ENCODE measurements at regions of chr6 and their contacts with region 1.

Region 1: GRCh38 chr6:146957181-146958093 is 246.8 kb upstream of the STXBP5 start:
- DNase-seq: no peak
- H3K4me3 ChIP-seq: no peak overlapping the region
- CTCF ChIP-seq: no peak
- POLR2A ChIP-seq: no peak

Region 2: DNA sequence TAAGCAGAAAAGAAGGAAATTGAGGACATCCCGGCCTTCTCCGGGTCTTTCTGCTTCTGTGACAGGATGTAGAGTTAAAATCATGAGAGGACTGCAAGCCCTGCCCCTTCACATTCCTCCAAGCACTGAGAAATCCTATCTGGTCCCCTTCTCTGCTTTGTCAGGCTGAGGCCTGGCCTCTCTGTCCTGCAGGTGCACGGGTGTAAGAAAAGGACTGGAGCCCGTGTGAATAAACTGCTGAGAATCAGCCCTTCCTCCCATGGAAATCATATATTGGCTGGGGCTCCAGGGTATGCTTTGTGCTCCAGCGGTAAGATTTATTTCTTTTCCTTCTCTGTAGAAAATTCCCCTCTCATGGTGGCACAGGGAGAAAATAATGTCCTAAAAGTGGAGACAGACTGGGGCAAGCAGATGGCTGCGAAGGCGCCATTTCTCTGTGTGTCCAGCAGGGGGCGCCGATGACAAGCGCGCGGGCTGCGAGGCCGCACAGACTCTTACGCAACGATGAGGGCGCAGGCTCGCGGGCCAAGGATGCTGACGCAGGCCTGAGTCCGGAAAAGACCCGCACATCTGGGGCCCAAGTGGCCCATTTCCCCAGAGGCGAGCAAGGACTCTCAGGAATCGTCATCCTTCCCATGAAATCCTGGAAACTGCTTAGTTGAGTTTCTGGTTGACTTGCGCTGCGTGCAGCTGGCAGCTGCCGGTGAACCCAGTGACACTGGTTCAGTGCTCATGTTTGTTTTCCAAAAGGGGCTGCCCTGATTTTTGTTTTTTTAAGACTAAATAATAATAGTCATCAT is 100.1 kb before region 1 on chr6:
- intact Hi-C with region 1: no loop called
- DNase-seq: peak; percentile 76 to 97
- H3K4me3 ChIP-seq: no peak overlapping the region
- CTCF ChIP-seq: peak in 1 of 3 donors; percentile 94
- POLR2A ChIP-seq: no peak

Region 3: GRCh38 chr6:148004651-148005050 is 1047.2 kb after region 1 on chr6:
- intact Hi-C with region 1: loop called (anchors 5 kb)
- DNase-seq: no peak
- H3K4me3 ChIP-seq: no peak overlapping the region
- CTCF ChIP-seq: no peak
- POLR2A ChIP-seq: no peak

Measured in lower leg skin (tissue), 4 donors.